ENCODE measurements at regions of chr4 and their contacts with region 1.

Region 1: DNA sequence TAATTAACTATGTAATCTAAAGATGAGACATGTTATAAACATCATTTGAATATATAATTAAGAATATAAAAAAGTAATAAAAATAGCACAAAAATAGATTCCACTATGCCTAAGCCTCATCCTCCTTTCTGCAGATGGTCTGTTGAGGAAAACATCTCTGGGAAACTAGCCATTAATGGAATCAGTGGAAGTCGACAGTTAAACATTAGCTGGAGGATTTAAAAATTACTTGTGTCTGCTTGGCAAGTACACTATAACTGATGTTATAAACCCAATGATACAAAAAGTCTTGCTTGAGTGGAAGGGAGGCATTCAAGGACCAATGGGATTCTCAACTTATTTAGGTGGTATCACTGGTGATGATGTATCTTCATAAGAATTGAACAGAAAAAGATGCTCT is 1598.3 kb downstream of the PCDH18 start:
- DNase-seq: no peak
- H3K4me3 ChIP-seq: no peak overlapping the region
- H3K27ac ChIP-seq: no peak overlapping the region
- H3K4me1 ChIP-seq: no peaks in the 10 kb centered on the region
- H3K27me3 ChIP-seq: no peaks in the 10 kb centered on the region
- CTCF ChIP-seq: no peak
- POLR2A ChIP-seq: no peak

Region 2: DNA sequence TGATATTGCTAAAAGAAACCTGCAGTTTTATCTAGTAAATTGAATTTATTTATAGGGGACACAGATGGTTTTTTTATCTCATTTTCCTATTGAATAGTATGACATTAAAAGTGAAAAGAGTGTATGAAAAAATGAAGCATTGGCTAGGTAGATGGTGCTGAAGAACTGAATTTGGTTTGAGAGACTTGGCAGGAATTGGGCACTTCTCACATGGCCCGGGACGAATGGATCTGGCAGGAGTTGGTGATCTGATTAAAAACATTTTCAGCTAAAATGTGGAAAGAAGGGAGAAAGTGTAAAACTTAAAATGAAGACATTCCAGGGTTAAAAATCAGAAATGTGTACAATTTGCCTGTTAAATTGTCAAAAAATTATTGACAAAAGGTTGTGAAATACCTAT is 643.9 kb before region 1 on chr4:
- intact Hi-C with region 1: loop called (anchors 5 kb)
- DNase-seq: no peak
- H3K4me3 ChIP-seq: no peak overlapping the region
- H3K27ac ChIP-seq: no peak overlapping the region
- H3K4me1 ChIP-seq: no peaks in the 10 kb centered on the region
- H3K27me3 ChIP-seq: no peaks in the 10 kb centered on the region
- CTCF ChIP-seq: no peak
- POLR2A ChIP-seq: no peak

Region 3: GRCh38 chr4:135917011-135917410 is 17.0 kb before region 1 on chr4:
- intact Hi-C with region 1: no loop called
- DNase-seq: no peak
- H3K4me3 ChIP-seq: no peak overlapping the region
- H3K27ac ChIP-seq: no peak overlapping the region
- H3K4me1 ChIP-seq: no peaks in the 10 kb centered on the region
- H3K27me3 ChIP-seq: no peaks in the 10 kb centered on the region
- CTCF ChIP-seq: no peak
- POLR2A ChIP-seq: no peak

Region 4: DNA sequence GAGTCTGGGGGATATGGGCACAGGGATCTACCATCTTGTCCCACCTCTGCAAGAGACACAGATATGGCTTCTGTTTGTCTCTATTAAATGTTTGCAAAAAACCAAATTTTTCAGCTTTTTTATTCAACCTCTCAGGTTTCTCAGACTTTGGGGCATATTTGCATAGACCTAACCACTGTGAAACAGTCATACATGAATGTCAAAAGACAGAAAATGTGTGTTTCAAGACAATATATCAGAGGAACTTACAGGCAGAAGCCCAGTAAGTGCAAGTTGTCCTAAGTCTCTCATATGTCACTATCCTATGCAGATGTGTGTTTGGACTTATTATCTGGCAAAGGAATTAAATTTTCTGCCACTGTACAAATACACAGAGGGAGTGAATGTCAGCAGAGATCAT is 647.1 kb after region 1 on chr4:
- intact Hi-C with region 1: no loop called
- DNase-seq: no peak
- H3K4me3 ChIP-seq: no peak overlapping the region
- H3K27ac ChIP-seq: no peak overlapping the region
- H3K4me1 ChIP-seq: no peaks in the 10 kb centered on the region
- H3K27me3 ChIP-seq: no peaks in the 10 kb centered on the region
- CTCF ChIP-seq: no peak
- POLR2A ChIP-seq: no peak